Activated naive CD4-positive, alpha-beta T cell treated with anti-CD3 and anti-CD28 coated beads for 36 hours (primary cell): ENCODE measurements at regions of chrX and their contacts with region 1.

Region 1: GRCh38 chrX:12894074-12895030 is 12.1 kb upstream of the TLR8 start:
- DNase-seq: peak; percentile 59
- H3K4me3 Mint-ChIP-seq: no peak overlapping the region
- H3K27ac Mint-ChIP-seq: no peak overlapping the region
- H3K4me1 Mint-ChIP-seq: peaks cover 31% of the 10 kb centered on the region
- H3K27me3 Mint-ChIP-seq: no peaks in the 10 kb centered on the region

Region 2: DNA sequence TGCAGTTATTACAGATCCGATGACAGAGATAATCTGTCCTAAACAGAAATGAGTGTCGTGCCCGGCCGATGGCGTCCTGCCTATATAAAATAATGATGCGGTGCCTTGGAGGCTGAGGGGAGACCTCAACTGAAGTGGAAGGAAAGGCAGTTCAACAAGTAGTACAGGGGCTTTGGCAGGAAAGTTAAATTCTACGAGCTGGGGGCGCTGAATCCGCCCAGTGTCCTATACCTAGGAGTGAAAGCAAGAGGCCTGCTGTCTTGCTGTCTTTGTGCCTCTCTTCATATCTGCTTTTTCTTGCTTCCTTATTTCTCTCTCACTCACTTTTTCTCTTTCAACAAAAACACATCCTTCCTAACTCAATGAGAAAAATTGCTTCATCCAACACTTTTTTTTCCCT is 185.3 kb before region 1 on chrX:
- CTCF ChIA-PET with region 1: interaction called, 3 read pairs
- intact Hi-C with region 1: loop called (anchors 1 kb)
- DNase-seq: peak; percentile 56
- H3K4me3 Mint-ChIP-seq: no peak overlapping the region
- H3K27ac Mint-ChIP-seq: no peak overlapping the region
- H3K4me1 Mint-ChIP-seq: no peaks in the 10 kb centered on the region
- H3K27me3 Mint-ChIP-seq: no peaks in the 10 kb centered on the region

Region 3: GRCh38 chrX:12814420-12814819 is 79.9 kb before region 1 on chrX:
- CTCF ChIA-PET with region 1: interaction called, 27 read pairs
- intact Hi-C with region 1: loop called (anchors 1 kb)
- DNase-seq: peak; percentile 64
- H3K4me3 Mint-ChIP-seq: no peak overlapping the region
- H3K27ac Mint-ChIP-seq: no peak overlapping the region
- H3K4me1 Mint-ChIP-seq: peaks cover 5% of the 10 kb centered on the region
- H3K27me3 Mint-ChIP-seq: no peaks in the 10 kb centered on the region

Region 4: DNA sequence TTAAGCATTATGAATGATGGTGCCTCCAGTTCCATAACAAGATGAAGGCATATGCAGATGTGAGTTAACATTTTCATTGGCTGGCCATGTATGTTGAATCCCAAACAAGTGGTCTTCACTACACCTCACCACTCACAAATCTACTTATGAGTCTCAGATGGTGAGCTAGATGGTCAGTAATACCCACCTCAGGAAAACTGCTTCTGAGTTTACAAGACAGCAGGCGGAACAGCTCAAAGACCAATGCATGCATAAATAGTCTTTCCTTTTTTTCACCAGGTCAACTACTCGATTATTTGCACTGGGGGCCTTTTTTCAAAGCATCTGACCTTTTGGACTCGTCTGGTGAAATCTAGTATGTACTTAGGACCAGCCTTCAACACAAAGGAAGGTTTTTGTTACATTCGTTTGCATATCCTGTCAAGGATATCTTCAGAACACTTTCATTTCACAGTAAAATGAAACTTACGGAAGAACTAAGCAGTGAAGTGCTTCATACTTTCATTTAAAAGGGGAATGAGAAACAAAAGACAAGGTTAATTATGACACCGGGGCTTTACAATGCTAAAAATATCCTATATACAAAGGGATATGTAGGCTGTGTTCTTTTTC is 50.6 kb before region 1 on chrX:
- CTCF ChIA-PET with region 1: no interaction called
- intact Hi-C with region 1: loop called (anchors 1 kb)
- DNase-seq: no peak
- H3K4me3 Mint-ChIP-seq: peak overlapping the region; percentile 65
- H3K27ac Mint-ChIP-seq: peak overlapping the region; percentile 93
- H3K4me1 Mint-ChIP-seq: peaks cover 17% of the 10 kb centered on the region
- H3K27me3 Mint-ChIP-seq: no peaks in the 10 kb centered on the region